Sigmoid colon (tissue), 7 donors: ENCODE measurements at regions of chr10 and their contacts with region 1.

Region 1: GRCh38 chr10:17847585-17848296 is 38.6 kb downstream of the MRC1 start:
- DNase-seq: no peak
- H3K4me3 ChIP-seq: no peak overlapping the region
- H3K27ac ChIP-seq: no peak overlapping the region
- H3K4me1 ChIP-seq: peaks cover 0 to 4% (median 0%) of the 10 kb centered on the region in 4 donors
- H3K27me3 ChIP-seq: no peaks in the 10 kb centered on the region
- CTCF ChIP-seq: peak in 1 of 4 experiments; percentile 35
- EP300 ChIP-seq: no peak
- POLR2A ChIP-seq: no peak

Region 2: DNA sequence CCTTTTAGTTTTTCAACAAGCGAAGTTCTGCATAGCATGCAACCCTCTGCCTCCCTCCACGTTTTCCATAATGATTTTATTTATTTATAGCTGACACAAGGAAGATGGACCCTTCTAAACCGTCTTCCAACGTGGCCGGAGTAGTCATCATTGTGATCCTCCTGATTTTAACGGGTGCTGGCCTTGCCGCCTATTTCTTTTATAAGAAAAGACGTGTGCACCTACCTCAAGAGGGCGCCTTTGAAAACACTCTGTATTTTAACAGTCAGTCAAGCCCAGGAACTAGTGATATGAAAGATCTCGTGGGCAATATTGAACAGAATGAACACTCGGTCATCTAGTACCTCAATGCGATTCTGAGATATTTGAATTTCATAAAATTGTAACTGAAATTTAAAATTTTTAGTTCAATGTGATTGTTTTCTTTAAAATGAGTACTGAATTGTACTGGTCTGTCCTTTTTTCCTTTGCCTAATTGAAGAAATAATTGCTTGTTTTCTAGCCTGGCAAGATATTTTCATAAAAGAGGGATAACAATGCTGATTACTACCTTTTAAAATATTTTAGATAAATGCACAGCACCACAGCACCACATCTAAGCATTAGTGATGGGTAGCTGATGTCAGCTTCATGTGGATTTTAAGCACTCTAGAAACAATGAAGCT is 62.5 kb after region 1 on chr10:
- intact Hi-C with region 1: loop called (anchors 5 kb)
- DNase-seq: peak; percentile 76
- H3K4me3 ChIP-seq: no peak overlapping the region
- H3K27ac ChIP-seq: no peak overlapping the region
- H3K4me1 ChIP-seq: peaks cover 0 to 28% (median 20%) of the 10 kb centered on the region in 4 donors
- H3K27me3 ChIP-seq: no peaks in the 10 kb centered on the region
- CTCF ChIP-seq: peak in 3 of 4 experiments; percentile 57 to 68 (median 60)
- EP300 ChIP-seq: no peak
- POLR2A ChIP-seq: no peak

Region 3: GRCh38 chr10:18214691-18215563 is 367.2 kb after region 1 on chr10:
- intact Hi-C with region 1: loop called (anchors 1 kb)
- DNase-seq: peak; percentile 68
- H3K4me3 ChIP-seq: no peak overlapping the region
- H3K27ac ChIP-seq: peak overlapping the region in 2 of 4 donors; percentile 26 to 58
- H3K4me1 ChIP-seq: peaks cover 0 to 81% (median 66%) of the 10 kb centered on the region in 4 donors
- H3K27me3 ChIP-seq: no peaks in the 10 kb centered on the region
- CTCF ChIP-seq: peak; percentile 59 to 82 (median 78)
- EP300 ChIP-seq: no peak
- POLR2A ChIP-seq: no peak

Region 4: GRCh38 chr10:18238870-18239485 is 391.2 kb after region 1 on chr10:
- intact Hi-C with region 1: loop called (anchors 2 kb)
- DNase-seq: no peak
- H3K4me3 ChIP-seq: no peak overlapping the region
- H3K27ac ChIP-seq: peak overlapping the region in 3 of 4 donors; percentile 50 to 83 (median 56)
- H3K4me1 ChIP-seq: peaks cover 0 to 37% (median 22%) of the 10 kb centered on the region in 4 donors
- H3K27me3 ChIP-seq: no peaks in the 10 kb centered on the region
- CTCF ChIP-seq: peak; percentile 23 to 71 (median 52)
- EP300 ChIP-seq: no peak
- POLR2A ChIP-seq: no peak